Activated CD4-positive, alpha-beta T cell treated with anti-CD3 and anti-CD28 coated beads for 36 hours (primary cell): ENCODE measurements at regions of chr22 and their contacts with region 1.

Region 1: DNA sequence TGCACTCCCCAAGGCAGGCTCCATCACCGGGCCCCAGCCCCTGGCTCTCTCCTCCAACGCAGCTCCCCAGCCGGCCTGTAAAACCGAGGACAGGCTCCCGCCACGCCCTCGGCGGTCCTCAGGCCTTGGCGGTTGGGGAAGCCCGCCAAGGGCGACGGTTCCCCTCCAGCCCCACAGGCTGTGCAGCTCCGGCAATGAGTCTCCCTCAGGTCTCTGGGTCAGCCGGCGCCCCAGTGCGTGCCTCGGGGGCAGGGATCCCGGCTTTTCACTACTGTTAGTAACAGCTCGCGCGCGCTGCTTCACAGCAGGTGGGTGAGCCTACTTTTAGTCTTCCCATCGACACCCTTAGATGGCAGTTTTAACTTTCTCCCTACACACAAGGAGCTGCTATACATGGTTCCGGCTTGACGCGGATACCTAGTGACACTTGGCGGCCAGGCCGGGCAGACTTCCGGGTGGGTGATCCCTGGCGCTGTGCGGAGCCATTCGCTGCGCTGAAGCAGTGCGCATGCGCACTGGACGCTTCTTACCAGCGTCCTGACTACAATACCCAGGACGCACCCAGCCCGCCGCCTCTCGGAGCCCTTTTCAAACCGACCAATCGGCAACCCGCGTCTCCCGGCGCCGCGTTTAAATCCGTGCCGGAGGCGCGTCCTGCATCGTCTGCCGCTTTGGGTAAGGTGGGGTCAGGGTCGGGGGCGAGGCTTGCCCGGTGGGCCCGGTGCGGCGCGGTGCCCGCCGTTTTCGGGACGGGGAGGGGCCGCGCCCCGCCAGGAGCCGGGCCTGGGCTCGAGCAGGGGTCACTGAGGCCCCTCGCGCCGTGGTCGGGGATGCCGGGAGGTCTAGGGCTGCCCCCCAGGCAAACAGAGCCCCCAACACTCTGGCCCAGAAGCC is at the start of gene GTSE1:
- DNase-seq: peak; percentile 99
- ATAC-seq: peak; percentile 99
- H3K4me3 Mint-ChIP-seq: peak within 1 kb of the TSS; percentile 90
- H3K27ac Mint-ChIP-seq: peak within 1 kb of the TSS; percentile 93
- H3K4me1 Mint-ChIP-seq: peaks cover 35% of the 10 kb centered on the region
- H3K27me3 Mint-ChIP-seq: peaks cover 4% of the 10 kb centered on the region
- total RNA-seq, gene GTSE1: 39.9 to 42.4 TPM

Region 2: GRCh38 chr22:45671768-45672563 is 624.5 kb before region 1 on chr22 and contains the start of gene ATXN10:
- CTCF ChIA-PET with region 1: no interaction called
- POLR2A ChIA-PET with region 1: no interaction called
- intact Hi-C with region 1: loop called in 1 of 2 experiments (anchors 10 kb)
- DNase-seq: peak; percentile 83
- ATAC-seq: peak; percentile 78
- H3K4me3 Mint-ChIP-seq: peak within 1 kb of the TSS; percentile 89
- H3K27ac Mint-ChIP-seq: peak within 1 kb of the TSS; percentile 87
- H3K4me1 Mint-ChIP-seq: peaks cover 33% of the 10 kb centered on the region
- H3K27me3 Mint-ChIP-seq: peaks cover 3% of the 10 kb centered on the region
- total RNA-seq, gene ATXN10: 87.1 to 101 TPM

Region 3: DNA sequence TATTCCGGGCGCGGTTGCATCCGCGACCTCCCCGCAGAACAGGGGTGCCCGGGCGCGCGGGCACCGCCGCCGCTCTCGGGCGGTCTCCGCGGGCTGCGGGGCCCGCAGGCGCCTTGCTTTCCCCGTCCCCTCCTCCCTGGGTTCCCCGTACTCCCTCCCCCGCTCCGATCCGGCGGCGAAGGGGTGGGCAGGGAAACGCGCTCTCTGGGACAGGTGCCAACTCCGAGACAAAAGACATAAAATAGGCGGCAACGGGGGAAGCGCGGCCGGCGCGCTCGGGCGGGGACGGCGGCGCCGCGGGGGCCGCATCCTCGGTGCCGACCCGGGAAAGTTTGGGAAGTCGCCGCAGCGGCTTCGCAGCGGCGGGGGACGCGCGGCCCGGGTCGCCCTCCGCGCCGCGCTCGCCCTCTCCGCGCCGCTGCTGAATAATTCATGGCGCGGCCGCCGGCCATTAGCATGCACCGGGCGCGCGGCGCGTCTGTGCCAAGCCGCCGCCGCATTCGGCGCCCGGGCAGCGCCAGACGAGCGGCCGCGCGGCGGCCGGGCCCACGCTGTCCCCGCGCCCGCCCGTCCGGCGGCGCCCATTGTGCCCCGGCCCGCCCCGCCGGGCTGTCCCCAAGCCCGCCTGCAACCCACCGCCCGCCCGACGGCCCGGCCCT is 224.9 kb before region 1 on chr22:
- CTCF ChIA-PET with region 1: no interaction called
- POLR2A ChIA-PET with region 1: no interaction called
- intact Hi-C with region 1: loop called in 1 of 2 experiments (anchors 1 kb)
- DNase-seq: peak; percentile 80
- ATAC-seq: peak; percentile 30
- H3K4me3 Mint-ChIP-seq: peak overlapping the region; percentile 74
- H3K27ac Mint-ChIP-seq: peak overlapping the region; percentile 69
- H3K4me1 Mint-ChIP-seq: peaks cover 40% of the 10 kb centered on the region
- H3K27me3 Mint-ChIP-seq: no peaks in the 10 kb centered on the region

Region 4: GRCh38 chr22:46150034-46150654 is 146.4 kb before region 1 on chr22 and contains the start of gene PPARA:
- CTCF ChIA-PET with region 1: no interaction called
- POLR2A ChIA-PET with region 1: interaction called, 5 read pairs
- intact Hi-C with region 1: loop called (anchors 1 kb)
- DNase-seq: peak; percentile 90
- ATAC-seq: peak; percentile 87
- H3K4me3 Mint-ChIP-seq: peak within 1 kb of the TSS; percentile 74
- H3K27ac Mint-ChIP-seq: no peak within 1 kb of the TSS
- H3K4me1 Mint-ChIP-seq: peaks cover 13% of the 10 kb centered on the region
- H3K27me3 Mint-ChIP-seq: peaks cover 7% of the 10 kb centered on the region
- total RNA-seq, gene PPARA: 6.2 to 8.9 TPM

Region 5: GRCh38 chr22:46256358-46256958 is 40.0 kb before region 1 on chr22:
- CTCF ChIA-PET with region 1: no interaction called
- POLR2A ChIA-PET with region 1: no interaction called
- intact Hi-C with region 1: no loop called
- DNase-seq: no peak
- ATAC-seq: no peak
- H3K4me3 Mint-ChIP-seq: no peak overlapping the region
- H3K27ac Mint-ChIP-seq: no peak overlapping the region
- H3K4me1 Mint-ChIP-seq: peaks cover 15% of the 10 kb centered on the region
- H3K27me3 Mint-ChIP-seq: peaks cover 20% of the 10 kb centered on the region

Region 6: GRCh38 chr22:46267431-46268279 is 28.8 kb before region 1 on chr22 and contains the start of gene TTC38:
- CTCF ChIA-PET with region 1: interaction called, 3 read pairs
- POLR2A ChIA-PET with region 1: no interaction called
- intact Hi-C with region 1: loop called in 1 of 2 experiments (anchors 1 kb)
- DNase-seq: peak; percentile 61
- ATAC-seq: peak; percentile 85
- H3K4me3 Mint-ChIP-seq: peak within 1 kb of the TSS; percentile 80
- H3K27ac Mint-ChIP-seq: no peak within 1 kb of the TSS
- H3K4me1 Mint-ChIP-seq: peaks cover 11% of the 10 kb centered on the region
- H3K27me3 Mint-ChIP-seq: peaks cover 33% of the 10 kb centered on the region
- total RNA-seq, gene TTC38: 5.2 to 5.8 TPM

Region 7: GRCh38 chr22:46737976-46738646 is 441.6 kb after region 1 on chr22 and contains the start of gene CERK:
- CTCF ChIA-PET with region 1: no interaction called
- POLR2A ChIA-PET with region 1: no interaction called
- intact Hi-C with region 1: loop called in 1 of 2 experiments (anchors 1 kb)
- DNase-seq: peak; percentile 76
- ATAC-seq: peak; percentile 24
- H3K4me3 Mint-ChIP-seq: peak within 1 kb of the TSS; percentile 99
- H3K27ac Mint-ChIP-seq: peak within 1 kb of the TSS; percentile 97
- H3K4me1 Mint-ChIP-seq: peaks cover 39% of the 10 kb centered on the region
- H3K27me3 Mint-ChIP-seq: no peaks in the 10 kb centered on the region
- total RNA-seq, gene CERK: 27.0 to 32.8 TPM